Calu3 (cell line): ENCODE measurements at regions of chr3 and their contacts with region 1.

Region 1: DNA sequence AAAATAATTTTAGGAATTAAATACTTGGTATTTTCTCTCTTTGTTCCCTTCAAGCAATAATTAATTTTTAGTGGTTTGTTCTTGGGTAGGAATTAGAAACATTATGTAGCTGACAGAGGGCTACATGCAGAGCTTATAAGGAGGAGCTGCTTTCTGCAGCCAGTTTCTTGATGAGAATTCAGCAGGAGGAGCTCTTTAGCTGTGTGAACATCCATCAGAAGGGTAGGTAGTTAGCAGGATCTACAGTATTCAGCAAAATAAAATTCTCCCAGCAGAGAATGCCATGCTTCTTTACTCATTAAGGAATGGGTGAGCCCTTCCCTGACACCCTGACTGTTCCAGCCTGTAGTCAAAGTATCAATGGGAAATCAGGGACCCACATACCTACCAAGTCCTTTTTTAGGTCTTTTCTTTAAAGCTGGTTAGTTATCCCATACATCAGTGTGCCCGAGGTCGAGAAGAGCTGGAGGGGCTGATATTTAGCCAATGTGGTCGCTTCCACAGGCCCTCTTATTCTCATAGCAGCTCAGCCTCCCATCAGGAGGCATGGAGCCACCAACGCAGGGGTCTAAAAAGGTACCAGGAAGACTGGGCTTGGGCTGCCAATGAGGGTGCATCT is 54.0 kb downstream of the KCNAB1 start:
- DNase-seq: no peak
- H3K4me3 Mint-ChIP-seq: no peak overlapping the region
- H3K27ac Mint-ChIP-seq: no peak overlapping the region
- H3K4me1 Mint-ChIP-seq: no peaks in the 10 kb centered on the region
- H3K27me3 Mint-ChIP-seq: peaks cover 66% of the 10 kb centered on the region
- CTCF ChIP-seq: peak; percentile 9

Region 2: DNA sequence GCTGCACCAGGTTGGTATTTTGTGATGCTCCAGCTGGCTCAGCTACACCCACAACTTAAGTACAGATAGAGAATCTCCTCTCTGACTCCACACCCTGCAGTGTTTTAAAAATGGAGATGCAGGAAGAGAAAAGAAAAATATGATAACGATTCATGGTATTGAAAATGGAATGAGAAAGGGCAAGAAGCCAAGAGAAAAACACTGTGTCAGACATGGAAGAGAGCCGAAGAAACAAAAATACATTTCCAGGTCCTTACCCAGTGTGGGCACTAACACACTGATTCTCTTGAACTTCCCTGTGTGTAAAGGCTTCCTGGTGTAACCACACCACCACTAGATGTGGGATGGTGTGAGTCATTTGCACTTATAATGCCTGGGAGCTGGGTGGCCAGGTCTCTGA is 210.8 kb before region 1 on chr3:
- CTCF ChIA-PET with region 1: no interaction called
- intact Hi-C with region 1: no loop called
- DNase-seq: no peak
- H3K4me3 Mint-ChIP-seq: no peak overlapping the region
- H3K27ac Mint-ChIP-seq: no peak overlapping the region
- H3K4me1 Mint-ChIP-seq: peaks cover 7% of the 10 kb centered on the region
- H3K27me3 Mint-ChIP-seq: no peaks in the 10 kb centered on the region
- CTCF ChIP-seq: no peak

Region 3: GRCh38 chr3:156382458-156383346 is 208.4 kb after region 1 on chr3:
- CTCF ChIA-PET with region 1: interaction called, 41 read pairs
- intact Hi-C with region 1: loop called (anchors 1 kb)
- DNase-seq: peak; percentile 82
- H3K4me3 Mint-ChIP-seq: no peak overlapping the region
- H3K27ac Mint-ChIP-seq: no peak overlapping the region
- H3K4me1 Mint-ChIP-seq: no peaks in the 10 kb centered on the region
- H3K27me3 Mint-ChIP-seq: peaks cover 80% of the 10 kb centered on the region
- CTCF ChIP-seq: peak; percentile 94

Region 4: GRCh38 chr3:156449712-156450574 is 275.6 kb after region 1 on chr3:
- CTCF ChIA-PET with region 1: interaction called, 6 read pairs
- intact Hi-C with region 1: loop called (anchors 5 kb)
- DNase-seq: peak; percentile 39
- H3K4me3 Mint-ChIP-seq: no peak overlapping the region
- H3K27ac Mint-ChIP-seq: no peak overlapping the region
- H3K4me1 Mint-ChIP-seq: no peaks in the 10 kb centered on the region
- H3K27me3 Mint-ChIP-seq: no peaks in the 10 kb centered on the region
- CTCF ChIP-seq: peak; percentile 61

Region 5: DNA sequence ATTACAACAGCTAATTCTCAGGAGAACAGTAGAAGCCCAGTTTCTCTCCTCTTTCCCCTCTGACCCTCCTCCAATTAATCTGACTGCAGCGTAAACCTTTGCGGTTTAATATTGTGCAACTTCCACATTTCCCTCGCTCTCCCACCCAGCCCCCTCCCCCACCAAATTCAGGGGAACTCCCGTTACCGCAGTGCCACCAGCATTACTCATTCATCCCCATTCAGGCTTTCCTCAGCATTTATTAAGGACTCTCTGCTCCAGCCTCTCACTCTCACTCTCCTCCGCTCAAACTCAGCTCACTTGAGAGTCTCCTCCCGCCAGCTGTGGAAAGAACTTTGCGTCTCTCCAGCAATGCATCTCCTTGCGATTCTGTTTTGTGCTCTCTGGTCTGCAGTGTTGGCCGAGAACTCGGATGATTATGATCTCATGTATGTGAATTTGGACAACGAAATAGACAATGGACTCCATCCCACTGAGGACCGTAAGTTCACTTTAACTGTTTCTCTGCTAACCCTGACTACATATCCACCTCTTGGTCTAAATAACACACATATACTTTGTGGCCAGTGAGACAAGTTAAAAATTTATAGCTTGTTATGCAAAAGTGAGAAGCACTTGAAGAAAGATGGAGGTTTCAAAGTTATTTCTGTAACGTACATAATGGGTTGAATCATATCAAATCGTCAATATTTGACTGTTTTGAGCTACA is 1262.4 kb after region 1 on chr3 and contains the start of gene PTX3:
- CTCF ChIA-PET with region 1: interaction called, 11 read pairs
- intact Hi-C with region 1: no loop called
- DNase-seq: peak; percentile 58
- H3K4me3 Mint-ChIP-seq: peak within 1 kb of the TSS; percentile 69
- H3K27ac Mint-ChIP-seq: peak within 1 kb of the TSS; percentile 33
- H3K4me1 Mint-ChIP-seq: peaks cover 18% of the 10 kb centered on the region
- H3K27me3 Mint-ChIP-seq: no peaks in the 10 kb centered on the region
- CTCF ChIP-seq: no peak
- total RNA-seq, gene PTX3: 1.8 and 2.9 TPM in 2 replicates